HEK293 (cell line): ENCODE measurements at regions of chr12 and their contacts with region 1.

Region 1: GRCh38 chr12:116276652-116277221 is 756 bp downstream of the MED13L start:
- H3K4me3 ChIP-seq: peak overlapping the region; percentile 65
- H3K27ac ChIP-seq: peak overlapping the region; percentile 95
- H3K4me1 ChIP-seq: peaks cover 10% of the 10 kb centered on the region; the same call in 1 of the 2 replicates
- CTCF ChIP-seq: no peak

Region 2: DNA sequence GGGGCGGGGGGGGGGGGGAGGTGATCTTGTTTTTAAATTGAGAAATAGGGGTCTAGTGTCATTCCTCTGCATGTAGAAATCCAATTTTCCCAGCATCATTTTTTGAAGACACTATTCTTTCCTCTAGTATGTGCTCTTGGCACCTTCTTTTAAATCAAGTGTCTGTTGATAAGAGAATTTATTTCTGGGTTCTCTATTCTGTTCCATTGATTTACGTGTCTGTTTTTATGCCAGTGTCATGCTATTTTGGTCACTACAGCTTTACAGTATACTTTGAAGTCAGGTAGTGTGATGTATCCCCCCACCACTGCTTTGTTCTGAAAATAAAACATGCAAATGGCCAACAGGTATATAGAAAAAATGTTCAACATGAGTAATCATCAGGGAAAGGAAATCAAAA is 252.0 kb before region 1 on chr12:
- CTCF ChIA-PET with region 1: no interaction called
- POLR2A ChIA-PET with region 1: no interaction called
- H3K4me3 ChIP-seq: no peak overlapping the region
- H3K27ac ChIP-seq: no peak overlapping the region
- H3K4me1 ChIP-seq: peaks cover 5% of the 10 kb centered on the region; the same call in 1 of the 2 replicates
- CTCF ChIP-seq: no peak

Region 3: DNA sequence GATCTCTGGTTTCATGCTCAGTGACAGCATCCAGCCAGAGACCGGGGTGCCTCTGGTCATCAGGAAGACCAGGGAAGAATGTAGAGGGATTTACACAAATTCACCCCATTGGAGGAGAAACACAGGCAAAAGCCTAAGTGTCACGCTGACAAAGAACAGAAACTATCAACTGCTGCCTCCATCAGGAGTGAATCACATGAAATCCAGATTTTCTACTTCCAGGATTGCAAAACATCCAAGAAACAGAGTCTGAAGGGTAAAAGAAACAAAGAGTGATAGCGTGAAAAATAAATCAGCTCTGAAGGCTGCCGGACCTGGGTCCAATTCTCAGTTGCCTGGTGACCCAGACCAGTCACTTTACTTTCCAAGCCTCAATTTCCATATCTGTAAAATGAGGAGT is 146.4 kb after region 1 on chr12:
- CTCF ChIA-PET with region 1: no interaction called
- POLR2A ChIA-PET with region 1: interaction called, 13 read pairs
- H3K4me3 ChIP-seq: no peak overlapping the region
- H3K27ac ChIP-seq: no peak overlapping the region
- H3K4me1 ChIP-seq: peaks cover 6% of the 10 kb centered on the region; the same call in 1 of the 2 replicates
- CTCF ChIP-seq: no peak